ENCODE measurements at regions of chr2 and their contacts with region 1.

Region 1: GRCh38 chr2:46062637-46063412 is 234.4 kb upstream of the EPAS1 start:
- DNase-seq: peak; percentile 65 to 76
- H3K4me3 ChIP-seq: no peak overlapping the region
- H3K27ac ChIP-seq: no peak overlapping the region
- H3K4me1 ChIP-seq: peaks cover 40% of the 10 kb centered on the region
- H3K27me3 ChIP-seq: no peaks in the 10 kb centered on the region
- CTCF ChIP-seq: peak; percentile 99

Region 2: DNA sequence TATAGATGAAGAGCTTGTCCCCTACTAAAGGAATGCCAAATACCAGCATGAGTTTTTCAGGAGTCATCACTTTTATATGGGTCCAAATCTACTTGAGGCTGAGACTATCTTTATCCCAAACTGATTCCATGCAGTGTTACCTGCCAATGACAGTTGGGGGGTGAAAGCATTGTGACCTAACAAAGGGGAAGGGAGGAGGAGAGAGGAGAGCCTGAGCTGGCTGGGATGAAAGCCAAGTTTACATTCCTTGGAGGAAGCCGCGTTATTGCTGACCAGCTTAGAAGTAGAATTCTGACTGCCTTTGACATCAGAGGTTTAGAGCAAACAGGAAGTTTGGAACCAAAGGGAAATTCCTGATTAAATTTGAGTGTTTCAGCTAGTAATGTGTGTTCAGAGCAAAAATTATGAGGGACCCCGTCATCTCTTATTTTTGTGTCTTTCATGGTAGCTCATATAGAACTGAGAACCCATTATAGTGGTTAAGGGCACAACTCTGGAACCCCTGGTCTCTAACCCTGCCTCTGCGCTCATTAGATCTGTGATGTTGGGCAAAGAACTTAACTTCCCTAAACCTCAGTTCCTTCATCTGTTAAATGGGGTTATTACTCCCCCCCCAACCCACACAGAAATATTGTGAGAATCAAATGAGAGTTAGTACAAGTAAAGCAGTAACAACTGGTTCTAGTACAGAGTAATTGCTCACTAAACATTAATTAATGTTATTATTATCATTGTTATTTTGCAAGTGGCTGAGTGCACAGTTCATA is 35.1 kb after region 1 on chr2:
- CTCF ChIA-PET with region 1: interaction called, 10 read pairs
- POLR2A ChIA-PET with region 1: interaction called, 3 read pairs
- intact Hi-C with region 1: loop called (anchors 1 kb)
- DNase-seq: peak; percentile 79 to 95
- H3K4me3 ChIP-seq: 0 out of 2 replicates have a peak overlapping the region, but pooled peaks have one; percentile 7
- H3K27ac ChIP-seq: peak overlapping the region; percentile 93
- H3K4me1 ChIP-seq: peaks cover 26% of the 10 kb centered on the region
- H3K27me3 ChIP-seq: no peaks in the 10 kb centered on the region
- CTCF ChIP-seq: no peak

Region 3: GRCh38 chr2:46117379-46117778 is 54.6 kb after region 1 on chr2:
- CTCF ChIA-PET with region 1: interaction called, 16 read pairs
- POLR2A ChIA-PET with region 1: no interaction called
- intact Hi-C with region 1: loop called (anchors 2 kb)
- DNase-seq: peak; percentile 38 to 75
- H3K4me3 ChIP-seq: no peak overlapping the region
- H3K27ac ChIP-seq: peak overlapping the region; percentile 67
- H3K4me1 ChIP-seq: peaks cover 49% of the 10 kb centered on the region
- H3K27me3 ChIP-seq: no peaks in the 10 kb centered on the region
- CTCF ChIP-seq: no peak

Region 4: GRCh38 chr2:46364797-46365457 is 302.1 kb after region 1 on chr2:
- CTCF ChIA-PET with region 1: interaction called, 4 read pairs
- POLR2A ChIA-PET with region 1: interaction called, 3 read pairs
- intact Hi-C with region 1: loop called (anchors 1 kb)
- DNase-seq: peak; percentile 35 to 49
- H3K4me3 ChIP-seq: no peak overlapping the region
- H3K27ac ChIP-seq: no peak overlapping the region
- H3K4me1 ChIP-seq: 0 out of 2 replicates have a peak, but pooled peaks cover 12% of the 10 kb centered on the region
- H3K27me3 ChIP-seq: no peaks in the 10 kb centered on the region
- CTCF ChIP-seq: peak; percentile 98

Region 5: DNA sequence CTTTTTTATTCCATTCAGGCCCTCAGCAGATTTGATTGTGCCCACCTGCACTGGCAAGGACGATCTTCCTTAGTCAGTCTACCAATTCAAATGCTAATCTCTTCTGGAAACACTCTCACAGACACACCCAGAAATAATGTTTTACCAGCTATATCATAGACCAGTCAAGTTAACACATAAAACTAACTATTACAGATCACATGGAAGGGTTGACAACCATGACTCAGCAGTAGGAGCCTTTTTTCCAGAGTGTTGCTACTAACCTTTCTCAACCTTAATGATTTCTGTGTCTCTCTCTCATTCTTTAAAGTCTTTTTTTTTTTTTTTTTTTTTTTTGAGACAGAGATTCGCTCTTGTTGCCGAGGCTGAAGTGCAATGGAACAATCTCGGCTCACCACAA is 1576.6 kb after region 1 on chr2:
- CTCF ChIA-PET with region 1: no interaction called
- POLR2A ChIA-PET with region 1: no interaction called
- intact Hi-C with region 1: no loop called
- DNase-seq: peak in 1 of 2 experiments; percentile 48
- H3K4me3 ChIP-seq: no peak overlapping the region
- H3K27ac ChIP-seq: no peak overlapping the region
- H3K4me1 ChIP-seq: peaks cover 21% of the 10 kb centered on the region
- H3K27me3 ChIP-seq: no peaks in the 10 kb centered on the region
- CTCF ChIP-seq: no peak

Measured in PC-9 (cell line).